WTC11 (cell line): ENCODE measurements at regions of chr17 and their contacts with region 1.

Region 1: GRCh38 chr17:76014184-76014924 is 12.8 kb downstream of the EVPL start:
- DNase-seq: peak; percentile 92
- ATAC-seq: peak; percentile 94
- H3K4me3 Mint-ChIP-seq: no peak overlapping the region
- H3K27ac Mint-ChIP-seq: no peak overlapping the region
- H3K4me1 Mint-ChIP-seq: 0 out of 2 replicates have a peak, but pooled peaks cover 2% of the 10 kb centered on the region
- H3K27me3 Mint-ChIP-seq: no peaks in the 10 kb centered on the region
- CTCF ChIP-seq: peak; percentile 98

Region 2: GRCh38 chr17:75896415-75897159 is 117.8 kb before region 1 on chr17 and contains the start of gene TRIM65:
- CTCF ChIA-PET with region 1: interaction called, 10 read pairs
- POLR2A ChIA-PET with region 1: no interaction called
- DNase-seq: peak; percentile 73
- ATAC-seq: peak; percentile 60
- H3K4me3 Mint-ChIP-seq: peak within 1 kb of the TSS; percentile 82
- H3K27ac Mint-ChIP-seq: peak within 1 kb of the TSS; percentile 88
- H3K4me1 Mint-ChIP-seq: peaks cover 26% of the 10 kb centered on the region
- H3K27me3 Mint-ChIP-seq: no peaks in the 10 kb centered on the region
- CTCF ChIP-seq: no peak
- total RNA-seq, gene TRIM65: 51.3 to 56.4 TPM (median 51.4 TPM) in 3 replicates

Region 3: DNA sequence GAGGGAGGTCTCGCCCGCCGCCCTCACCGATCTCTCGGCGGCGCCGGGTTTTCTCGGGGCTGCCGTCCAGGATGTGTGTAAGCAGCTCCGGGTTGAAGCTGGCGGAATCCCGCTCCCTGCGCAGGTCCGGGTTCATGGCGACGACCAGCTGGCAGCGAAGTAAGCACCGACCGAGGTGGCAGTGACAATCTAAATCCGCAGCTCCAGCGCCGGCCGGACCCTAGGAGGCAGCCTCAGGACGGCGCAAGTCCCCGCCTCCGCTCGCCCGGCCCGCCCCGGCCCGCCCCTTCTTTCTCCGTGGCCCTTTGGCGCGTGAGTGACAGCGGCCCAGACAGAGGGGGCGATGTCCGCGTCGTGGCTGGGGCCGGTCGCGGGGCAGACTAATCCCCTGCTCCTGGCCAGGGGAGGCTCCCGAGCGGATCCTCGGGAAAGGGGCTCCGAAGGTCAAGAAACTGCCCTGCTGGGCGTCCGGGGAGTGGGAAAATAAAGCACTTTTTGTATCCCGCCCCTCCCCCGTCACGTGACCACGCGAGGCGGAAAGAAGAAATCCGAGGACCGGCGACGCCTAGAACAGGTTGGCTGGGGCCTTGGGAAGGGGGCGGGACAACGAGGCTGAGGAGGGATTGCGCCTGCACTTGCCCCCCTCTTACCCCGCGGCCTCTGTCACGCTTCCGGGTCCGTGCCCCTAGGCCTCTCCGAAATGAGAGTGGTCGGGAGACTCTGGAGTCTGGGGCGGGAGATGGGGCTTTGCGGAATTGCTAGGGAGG is 35.2 kb before region 1 on chr17 and contains the starts of genes ACOX1 and TEN1:
- CTCF ChIA-PET with region 1: interaction called, 19 read pairs
- POLR2A ChIA-PET with region 1: no interaction called
- DNase-seq: peak; percentile 96
- ATAC-seq: peak; percentile 91
- H3K4me3 Mint-ChIP-seq: peak within 1 kb of the TSS; percentile 97
- H3K27ac Mint-ChIP-seq: peak within 1 kb of the TSS; percentile 100
- H3K4me1 Mint-ChIP-seq: peaks cover 63% of the 10 kb centered on the region
- H3K27me3 Mint-ChIP-seq: no peaks in the 10 kb centered on the region
- CTCF ChIP-seq: no peak
- total RNA-seq, gene ACOX1: 32.4 to 40.9 TPM (median 32.5 TPM) in 3 replicates
- total RNA-seq, gene TEN1: 15.6 to 18.4 TPM (median 17.2 TPM) in 3 replicates

Region 4: GRCh38 chr17:76036497-76037261 is 22.3 kb after region 1 on chr17:
- CTCF ChIA-PET with region 1: interaction called, 42 read pairs
- POLR2A ChIA-PET with region 1: no interaction called
- DNase-seq: no peak
- ATAC-seq: peak; percentile 43
- H3K4me3 Mint-ChIP-seq: no peak overlapping the region
- H3K27ac Mint-ChIP-seq: peak overlapping the region; percentile 90
- H3K4me1 Mint-ChIP-seq: peaks cover 19% of the 10 kb centered on the region
- H3K27me3 Mint-ChIP-seq: no peaks in the 10 kb centered on the region
- CTCF ChIP-seq: no peak

Region 5: GRCh38 chr17:76079956-76080767 is 65.8 kb after region 1 on chr17:
- CTCF ChIA-PET with region 1: interaction called, 43 read pairs
- POLR2A ChIA-PET with region 1: no interaction called
- DNase-seq: peak; percentile 49
- ATAC-seq: peak; percentile 31
- H3K4me3 Mint-ChIP-seq: peak overlapping the region; percentile 59
- H3K27ac Mint-ChIP-seq: no peak overlapping the region
- H3K4me1 Mint-ChIP-seq: peaks cover 47% of the 10 kb centered on the region
- H3K27me3 Mint-ChIP-seq: peaks cover 46% of the 10 kb centered on the region
- CTCF ChIP-seq: no peak

Region 6: DNA sequence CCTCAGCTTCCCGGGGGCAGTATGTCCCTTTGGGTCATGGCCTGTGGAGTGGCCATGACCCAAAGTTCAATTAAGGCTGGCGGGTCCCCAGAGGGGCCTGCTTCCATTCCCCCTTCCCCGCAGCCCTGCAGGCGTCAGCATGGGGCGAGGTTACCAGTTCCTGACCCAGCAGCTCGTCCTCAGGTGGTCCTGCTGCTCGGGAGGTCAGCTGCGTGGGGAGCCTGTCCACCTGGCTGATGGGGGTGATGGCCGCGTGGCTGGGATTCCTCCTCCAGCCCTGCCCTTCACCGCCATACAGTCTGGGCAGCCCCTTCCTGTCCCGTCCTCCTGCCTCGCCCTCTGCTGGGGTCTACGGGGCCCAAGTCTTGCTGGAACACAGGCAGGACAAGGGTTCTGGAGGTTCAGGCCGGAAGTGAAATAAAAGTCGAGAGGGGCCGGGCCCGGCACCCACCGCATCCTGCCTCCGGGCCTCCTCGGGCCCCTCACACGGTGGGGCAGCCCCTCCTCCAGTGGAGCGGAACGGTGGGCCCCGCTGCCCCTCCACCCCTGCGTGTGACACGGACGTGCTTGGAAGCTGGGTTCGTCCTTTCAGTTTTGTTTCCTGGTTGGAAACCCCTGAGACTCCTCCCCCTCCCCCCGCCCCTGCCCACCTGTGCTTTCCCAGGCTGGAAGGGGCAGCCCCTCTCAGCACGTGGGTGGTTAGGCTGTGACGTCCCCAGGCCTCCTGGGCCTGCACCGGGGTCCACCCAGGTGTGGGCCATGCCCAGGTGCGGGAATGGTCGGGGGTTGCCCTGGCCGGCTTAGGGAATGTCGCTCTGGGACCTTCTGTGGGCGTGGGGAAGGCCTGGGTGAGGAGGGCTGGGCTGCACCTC is 257.6 kb after region 1 on chr17:
- CTCF ChIA-PET with region 1: interaction called, 13 read pairs
- POLR2A ChIA-PET with region 1: no interaction called
- DNase-seq: peak; percentile 45
- ATAC-seq: peak; percentile 45
- H3K4me3 Mint-ChIP-seq: no peak overlapping the region
- H3K27ac Mint-ChIP-seq: no peak overlapping the region
- H3K4me1 Mint-ChIP-seq: peaks cover 27% of the 10 kb centered on the region
- H3K27me3 Mint-ChIP-seq: no peaks in the 10 kb centered on the region
- CTCF ChIP-seq: no peak

Region 7: GRCh38 chr17:76307299-76307965 is 293.1 kb after region 1 on chr17:
- CTCF ChIA-PET with region 1: interaction called, 11 read pairs
- POLR2A ChIA-PET with region 1: no interaction called
- DNase-seq: no peak
- ATAC-seq: no peak
- H3K4me3 Mint-ChIP-seq: no peak overlapping the region
- H3K27ac Mint-ChIP-seq: no peak overlapping the region
- H3K4me1 Mint-ChIP-seq: no peaks in the 10 kb centered on the region
- H3K27me3 Mint-ChIP-seq: no peaks in the 10 kb centered on the region
- CTCF ChIP-seq: no peak